ENCODE measurements at regions of chr10 and their contacts with region 1.

Region 1: DNA sequence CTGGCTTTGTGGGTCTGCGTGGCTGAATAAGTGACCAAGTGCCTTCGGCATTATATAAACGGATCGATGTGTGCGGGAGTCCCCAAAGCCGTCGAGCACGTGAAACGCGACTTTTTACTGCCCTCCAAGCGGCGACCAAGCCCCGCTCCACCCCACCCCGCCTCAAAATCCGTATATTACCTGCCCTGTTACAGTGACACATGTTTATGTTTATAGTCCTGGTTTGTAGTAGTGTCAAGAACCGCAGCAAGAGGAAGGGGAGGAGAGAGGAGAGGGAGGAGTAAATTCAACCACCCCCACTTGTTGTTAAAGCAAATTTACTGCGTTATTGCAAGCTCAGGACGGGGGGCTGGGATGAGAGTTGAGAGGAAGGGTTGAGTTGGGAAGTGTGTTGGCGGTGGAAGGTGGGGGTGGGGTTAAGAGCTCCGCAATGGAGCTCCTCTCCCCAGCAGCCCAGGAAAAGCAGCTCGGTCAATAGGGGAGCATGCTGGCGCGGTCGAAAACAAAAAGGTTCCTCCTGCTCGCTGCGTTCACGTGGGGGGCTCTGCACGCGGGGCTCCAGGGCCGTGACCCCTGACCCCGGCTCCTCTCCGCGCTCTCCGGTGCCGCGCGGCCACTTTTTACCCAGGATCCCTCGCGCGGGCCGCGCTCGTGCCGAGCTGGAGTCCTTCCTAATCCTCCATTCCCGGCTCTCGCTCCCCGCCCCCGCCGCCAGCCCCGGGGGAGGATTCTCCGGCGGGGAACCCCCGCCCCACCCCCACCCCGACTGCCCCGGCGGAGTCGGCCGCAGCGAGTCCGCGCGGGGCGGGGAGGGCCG is at the start of gene SKIDA1:
- DNase-seq: peak; percentile 62

Region 2: GRCh38 chr10:21724695-21725367 is 199.3 kb after region 1 on chr10:
- CTCF ChIA-PET with region 1: no interaction called
- POLR2A ChIA-PET with region 1: interaction called, 14 read pairs
- DNase-seq: peak; percentile 76

Region 3: GRCh38 chr10:21961847-21962246 is 436.3 kb after region 1 on chr10:
- CTCF ChIA-PET with region 1: no interaction called
- POLR2A ChIA-PET with region 1: no interaction called
- DNase-seq: no peak